PC-3 (cell line): ENCODE measurements at regions of chr11 and their contacts with region 1.

Region 1: GRCh38 chr11:62054484-62055121 is 69.2 kb upstream of the INCENP start:
- DNase-seq: peak; percentile 95
- ATAC-seq: peak; percentile 87
- H3K4me3 ChIP-seq: no peak overlapping the region
- H3K27ac ChIP-seq: peak overlapping the region; percentile 64
- H3K4me1 ChIP-seq: peaks cover 36% of the 10 kb centered on the region
- H3K27me3 ChIP-seq: no peaks in the 10 kb centered on the region
- CTCF ChIP-seq: peak; percentile 93

Region 2: DNA sequence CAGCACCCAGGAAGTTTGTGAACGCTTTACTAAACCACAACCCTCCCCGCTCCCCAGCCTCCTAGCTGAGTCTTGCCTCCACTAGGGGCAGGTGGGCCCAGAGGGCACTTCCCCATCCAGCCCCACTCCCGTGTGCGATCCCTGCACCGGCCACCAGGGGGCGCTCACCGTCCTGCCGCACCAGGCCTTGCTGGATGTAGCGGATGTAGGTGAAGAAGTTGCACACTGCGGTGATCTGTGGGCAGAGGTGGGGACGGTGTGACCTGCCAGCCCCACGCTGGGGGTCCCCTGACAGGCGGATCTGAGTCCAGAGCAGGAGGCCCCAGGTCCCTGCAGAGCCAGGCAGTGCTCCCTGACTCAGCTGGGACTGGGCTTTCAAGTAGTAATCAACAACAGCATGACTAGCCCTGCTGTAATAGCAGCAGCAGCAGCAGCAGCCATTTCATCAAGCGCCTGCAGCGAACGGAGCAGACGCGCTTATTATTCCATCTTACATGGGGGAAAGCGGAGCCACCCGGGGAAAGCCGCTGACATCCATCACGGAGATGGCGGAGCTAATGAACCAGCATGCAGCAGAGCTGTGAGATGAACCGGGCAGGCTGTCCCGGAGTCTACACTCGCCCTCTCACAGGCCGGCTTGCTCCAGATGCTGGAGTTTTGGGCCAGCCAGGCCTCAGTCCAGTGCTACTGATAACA is 155.3 kb before region 1 on chr11:
- CTCF ChIA-PET with region 1: interaction called, 4 read pairs
- POLR2A ChIA-PET with region 1: no interaction called
- intact Hi-C with region 1: loop called (anchors 1 kb)
- DNase-seq: peak; percentile 94
- ATAC-seq: peak; percentile 85
- H3K4me3 ChIP-seq: no peak overlapping the region
- H3K27ac ChIP-seq: no peak overlapping the region
- H3K4me1 ChIP-seq: no peaks in the 10 kb centered on the region
- H3K27me3 ChIP-seq: no peaks in the 10 kb centered on the region
- CTCF ChIP-seq: peak; percentile 99

Region 3: DNA sequence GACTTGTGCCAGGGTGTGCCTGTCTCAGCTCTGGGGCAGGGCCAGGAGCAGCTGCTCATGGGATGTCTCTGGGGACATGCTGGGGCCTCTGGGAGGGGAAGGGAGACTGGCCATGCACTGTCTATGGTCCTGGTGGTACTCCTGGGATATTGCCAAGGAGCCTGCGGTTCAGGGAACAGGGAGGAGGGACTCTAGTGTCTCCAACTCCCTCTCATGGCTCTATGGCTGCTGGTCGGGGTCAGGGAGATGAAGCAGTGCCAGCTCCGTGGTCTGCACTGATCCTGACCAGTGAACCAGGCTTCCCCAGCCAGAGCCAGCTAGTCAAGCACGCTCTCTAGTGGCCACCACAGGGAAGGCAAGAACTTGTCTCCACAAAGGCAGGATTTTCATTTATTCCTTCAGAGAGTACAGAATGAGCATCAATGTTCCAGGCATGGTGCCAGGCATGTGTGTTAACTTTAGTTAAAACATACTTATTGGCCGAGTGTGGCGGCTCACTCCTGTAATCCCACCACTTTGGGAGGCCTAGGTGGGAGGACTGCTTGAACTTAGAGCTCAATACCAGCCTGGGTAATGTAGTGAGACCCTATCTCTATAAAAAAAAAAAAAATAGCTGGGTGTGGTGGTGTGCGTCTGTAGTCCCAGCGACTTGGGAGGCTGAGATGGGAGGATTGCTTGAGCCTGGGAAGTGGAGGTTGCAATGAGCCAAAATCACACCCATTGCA is 107.0 kb before region 1 on chr11:
- CTCF ChIA-PET with region 1: no interaction called
- POLR2A ChIA-PET with region 1: no interaction called
- intact Hi-C with region 1: loop called (anchors 1 kb)
- DNase-seq: peak; percentile 92
- ATAC-seq: peak; percentile 85
- H3K4me3 ChIP-seq: no peak overlapping the region
- H3K27ac ChIP-seq: no peak overlapping the region
- H3K4me1 ChIP-seq: peaks cover 7% of the 10 kb centered on the region; the same call in 1 of the 2 replicates
- H3K27me3 ChIP-seq: no peaks in the 10 kb centered on the region
- CTCF ChIP-seq: peak; percentile 97

Region 4: GRCh38 chr11:61954851-61955421 is 99.7 kb before region 1 on chr11:
- CTCF ChIA-PET with region 1: no interaction called
- POLR2A ChIA-PET with region 1: no interaction called
- intact Hi-C with region 1: loop called (anchors 1 kb)
- DNase-seq: no peak
- ATAC-seq: peak; percentile 28; the same call in 1 of the 2 replicates
- H3K4me3 ChIP-seq: no peak overlapping the region
- H3K27ac ChIP-seq: no peak overlapping the region
- H3K4me1 ChIP-seq: peaks cover 8% of the 10 kb centered on the region
- H3K27me3 ChIP-seq: no peaks in the 10 kb centered on the region
- CTCF ChIP-seq: no peak

Region 5: GRCh38 chr11:62033191-62034044 is 21.2 kb before region 1 on chr11:
- CTCF ChIA-PET with region 1: no interaction called
- POLR2A ChIA-PET with region 1: no interaction called
- intact Hi-C with region 1: loop called (anchors 1 kb)
- DNase-seq: peak; percentile 93
- ATAC-seq: peak; percentile 94
- H3K4me3 ChIP-seq: no peak overlapping the region
- H3K27ac ChIP-seq: peak overlapping the region; percentile 78
- H3K4me1 ChIP-seq: peaks cover 17% of the 10 kb centered on the region
- H3K27me3 ChIP-seq: no peaks in the 10 kb centered on the region
- CTCF ChIP-seq: no peak